ENCODE measurements at regions of chrX and their contacts with region 1.

Region 1: DNA sequence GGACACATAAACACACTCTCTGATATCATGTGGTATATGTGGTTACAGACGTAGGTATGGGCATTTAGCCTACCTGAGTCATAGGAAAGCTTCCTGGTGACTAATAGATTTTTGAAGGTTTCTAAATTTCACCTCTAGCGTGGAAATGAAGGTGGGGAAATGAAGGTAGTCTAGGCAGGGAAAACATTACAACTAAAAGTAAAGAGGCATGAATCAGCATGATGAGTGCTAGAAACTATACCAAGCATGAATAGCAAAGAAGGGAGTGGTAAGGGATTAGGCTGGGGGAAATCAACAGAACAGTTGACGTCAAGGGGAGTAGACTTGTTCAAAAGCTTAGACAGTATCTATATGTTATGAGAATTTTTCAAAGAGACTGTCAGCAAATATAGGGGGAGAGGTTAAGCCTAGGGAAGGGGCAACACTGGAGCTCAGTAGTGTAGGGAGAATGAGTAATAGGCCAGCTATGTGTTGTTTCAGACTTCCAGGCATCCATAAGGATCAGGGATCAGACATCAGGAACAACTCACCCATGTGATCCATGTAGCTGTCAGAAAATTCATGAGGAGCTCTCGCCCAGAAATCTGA is 279.3 kb upstream of the DIPK2B start:
- DNase-seq: peak; percentile 99
- H3K4me3 ChIP-seq: no peak overlapping the region
- H3K27ac ChIP-seq: peak overlapping the region; percentile 99
- H3K4me1 ChIP-seq: peaks cover 26% of the 10 kb centered on the region
- H3K27me3 ChIP-seq: no peaks in the 10 kb centered on the region
- CTCF ChIP-seq: no peak

Region 2: DNA sequence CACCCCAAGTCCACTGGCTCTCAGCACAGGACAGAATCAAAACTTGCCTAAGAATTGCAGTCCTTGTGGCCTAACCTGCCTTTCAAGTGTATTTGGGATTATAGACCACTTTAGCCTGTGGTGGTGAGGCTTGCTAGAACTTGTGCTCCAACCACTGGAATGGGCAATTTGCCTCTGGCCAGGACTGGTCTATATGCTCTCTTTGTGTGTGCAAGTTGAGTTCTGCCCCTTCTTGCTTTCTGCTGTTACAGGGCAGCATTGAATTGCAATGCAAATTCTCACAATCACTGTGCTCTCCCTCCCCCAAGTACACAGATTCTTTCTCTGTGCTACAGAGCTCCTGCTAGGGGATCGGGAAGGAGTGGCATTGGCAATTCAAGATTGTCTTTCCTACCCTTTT is 45.7 kb before region 1 on chrX:
- CTCF ChIA-PET with region 1: no interaction called
- dilution Hi-C with region 1: loop called (anchors 5 kb)
- in situ Hi-C with region 1: no loop called
- intact Hi-C with region 1: loop called (anchors 2 kb)
- DNase-seq: peak; percentile 95
- H3K4me3 ChIP-seq: no peak overlapping the region
- H3K27ac ChIP-seq: peak overlapping the region; percentile 48
- H3K4me1 ChIP-seq: peaks cover 27% of the 10 kb centered on the region
- H3K27me3 ChIP-seq: no peaks in the 10 kb centered on the region
- CTCF ChIP-seq: no peak

Region 3: GRCh38 chrX:45497290-45497689 is 17.4 kb after region 1 on chrX:
- CTCF ChIA-PET with region 1: interaction called, 14 read pairs
- dilution Hi-C with region 1: no loop called
- in situ Hi-C with region 1: no loop called
- intact Hi-C with region 1: no loop called
- DNase-seq: peak; percentile 89
- H3K4me3 ChIP-seq: no peak overlapping the region
- H3K27ac ChIP-seq: no peak overlapping the region
- H3K4me1 ChIP-seq: peaks cover 7% of the 10 kb centered on the region
- H3K27me3 ChIP-seq: no peaks in the 10 kb centered on the region
- CTCF ChIP-seq: no peak

Region 4: GRCh38 chrX:45524296-45524695 is 44.4 kb after region 1 on chrX:
- CTCF ChIA-PET with region 1: no interaction called
- dilution Hi-C with region 1: loop called (anchors 5 kb)
- in situ Hi-C with region 1: no loop called
- intact Hi-C with region 1: no loop called
- DNase-seq: peak; percentile 39
- H3K4me3 ChIP-seq: no peak overlapping the region
- H3K27ac ChIP-seq: peak overlapping the region; percentile 11
- H3K4me1 ChIP-seq: peaks cover 13% of the 10 kb centered on the region
- H3K27me3 ChIP-seq: no peaks in the 10 kb centered on the region
- CTCF ChIP-seq: no peak

Region 5: DNA sequence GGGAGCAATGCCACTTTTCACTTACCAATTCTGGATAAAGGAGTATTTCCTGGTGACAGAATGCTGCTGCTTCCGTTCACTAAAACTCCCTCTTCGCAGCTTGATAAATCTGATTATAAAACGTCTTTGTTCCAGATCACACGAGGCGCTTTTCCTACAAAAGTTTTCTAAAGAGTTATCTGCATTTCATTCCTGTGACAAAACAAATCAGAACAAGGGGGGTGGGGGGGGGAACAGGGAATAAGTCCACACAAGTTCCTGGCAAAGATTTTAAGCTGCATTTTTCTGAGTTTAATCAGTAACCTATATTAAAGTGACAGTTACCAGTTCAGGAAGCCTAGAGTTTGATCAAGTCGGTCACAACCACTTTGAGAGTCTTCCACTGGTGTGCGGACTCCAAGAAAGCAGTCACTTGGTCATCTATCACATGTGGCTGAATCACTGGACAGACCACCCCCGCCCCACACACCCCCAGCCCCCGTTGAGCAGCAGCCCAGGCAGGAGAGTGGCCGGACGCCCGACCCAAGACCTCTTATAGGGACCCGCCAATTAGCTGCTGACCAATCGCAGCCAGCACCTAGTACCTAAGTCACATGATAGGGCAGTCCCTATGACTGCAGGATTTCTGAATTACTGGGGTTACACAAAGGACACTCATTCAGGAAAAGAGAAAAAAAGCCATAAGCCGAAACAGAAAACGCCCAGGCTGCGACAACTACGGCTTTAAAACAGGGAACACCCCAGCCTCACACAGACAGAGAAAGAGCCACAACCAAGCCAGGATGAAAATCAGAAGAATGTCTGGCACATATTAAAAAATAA is 290.0 kb after region 1 on chrX:
- CTCF ChIA-PET with region 1: no interaction called
- dilution Hi-C with region 1: loop called (anchors 25 kb)
- in situ Hi-C with region 1: no loop called
- intact Hi-C with region 1: no loop called
- DNase-seq: peak; percentile 86
- H3K4me3 ChIP-seq: peak overlapping the region; percentile 59 to 98 (median 91)
- H3K27ac ChIP-seq: peak overlapping the region; percentile 98
- H3K4me1 ChIP-seq: peaks cover 41% of the 10 kb centered on the region
- H3K27me3 ChIP-seq: no peaks in the 10 kb centered on the region
- CTCF ChIP-seq: no peak

Measured in mammary epithelial cell (primary cell).